H1 (cell line): ENCODE measurements at regions of chr13 and their contacts with region 1.

Region 1: GRCh38 chr13:57582032-57582431 is 49.5 kb upstream of the PCDH17 start:
- DNase-seq: peak; percentile 21 to 51
- H3K4me3 ChIP-seq: no peak overlapping the region
- H3K27ac ChIP-seq: no peak overlapping the region
- H3K4me1 ChIP-seq: peaks cover 0 to 3% (median 0%) of the 10 kb centered on the region in 4 experiments; a peak in 1 of 7 replicates
- H3K27me3 ChIP-seq: no peaks in the 10 kb centered on the region
- CTCF ChIP-seq: peak in 2 of 3 experiments; percentile 50 to 61; a peak in 3 of 4 replicates
- EP300 ChIP-seq: no peak
- POLR2A ChIP-seq: no peak
- RAD21 ChIP-seq: peak; percentile 49 to 65

Region 2: DNA sequence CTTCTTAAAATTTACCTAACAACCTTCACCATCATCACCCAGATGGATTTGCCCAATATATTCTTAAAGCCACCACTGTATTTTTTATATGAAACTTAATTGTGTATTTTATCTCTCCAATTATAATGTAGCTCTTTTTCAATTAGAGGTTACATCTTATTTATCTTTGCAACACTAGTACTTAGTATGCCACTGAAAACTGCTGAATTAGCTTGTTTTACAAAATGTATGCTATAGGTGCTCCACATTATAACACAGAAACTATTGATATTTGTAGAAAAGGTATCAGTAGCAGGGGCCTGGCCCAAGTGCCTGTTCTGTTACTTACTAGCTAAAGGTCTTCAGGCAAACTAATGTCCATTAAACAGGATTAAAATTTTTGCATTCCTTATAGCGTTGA is 13.7 kb after region 1 on chr13:
- CTCF ChIA-PET with region 1: interaction called, 16 read pairs
- POLR2A ChIA-PET with region 1: no interaction called
- DNase-seq: no peak
- H3K4me3 ChIP-seq: no peak overlapping the region
- H3K27ac ChIP-seq: no peak overlapping the region
- H3K4me1 ChIP-seq: no peaks in the 10 kb centered on the region
- H3K27me3 ChIP-seq: no peaks in the 10 kb centered on the region
- CTCF ChIP-seq: no peak
- EP300 ChIP-seq: no peak
- POLR2A ChIP-seq: no peak
- RAD21 ChIP-seq: no peak

Region 3: DNA sequence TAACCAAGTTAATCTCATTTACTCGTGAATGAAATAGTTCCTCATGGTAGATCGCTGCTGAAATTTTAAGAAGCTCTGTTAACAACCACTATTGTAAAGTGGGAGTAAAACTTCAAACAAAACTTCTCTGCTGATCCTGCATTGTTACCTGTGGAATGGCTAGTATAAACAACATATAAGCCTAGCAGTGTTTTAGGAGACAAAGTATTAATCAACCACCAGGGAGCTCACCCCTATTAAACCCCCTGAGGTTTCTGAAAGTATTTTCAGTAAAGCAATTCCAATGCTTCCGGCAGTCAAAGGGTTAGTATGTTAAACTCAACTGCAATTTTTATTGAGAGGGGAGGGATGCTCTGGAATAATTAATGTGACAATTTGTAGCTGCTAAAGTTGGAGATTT is 19.5 kb after region 1 on chr13:
- CTCF ChIA-PET with region 1: interaction called, 16 read pairs
- POLR2A ChIA-PET with region 1: no interaction called
- DNase-seq: no peak
- H3K4me3 ChIP-seq: no peak overlapping the region
- H3K27ac ChIP-seq: no peak overlapping the region
- H3K4me1 ChIP-seq: peaks cover 0 to 6% (median 2%) of the 10 kb centered on the region in 4 experiments; a peak in 2 of 7 replicates
- H3K27me3 ChIP-seq: no peaks in the 10 kb centered on the region
- CTCF ChIP-seq: no peak
- EP300 ChIP-seq: no peak
- POLR2A ChIP-seq: no peak
- RAD21 ChIP-seq: no peak

Region 4: DNA sequence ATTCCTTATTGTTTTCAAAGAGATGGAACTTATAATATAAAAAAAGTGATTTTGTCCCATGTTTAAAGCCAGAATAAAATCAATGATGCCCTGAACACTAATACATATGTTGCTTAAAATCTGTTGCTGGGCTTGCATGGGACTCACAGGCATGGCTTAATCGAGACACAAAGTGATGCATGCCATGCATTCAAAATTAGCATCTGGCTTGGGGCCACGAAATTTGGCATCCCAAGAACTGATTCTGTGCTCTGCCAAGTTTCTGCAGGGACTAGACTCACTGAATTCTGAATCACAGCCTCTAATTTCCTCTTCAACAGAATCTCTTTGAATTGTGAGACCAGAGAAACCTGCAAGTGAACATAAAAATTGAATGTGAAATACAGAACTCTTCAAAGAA is 158.7 kb after region 1 on chr13:
- CTCF ChIA-PET with region 1: no interaction called
- POLR2A ChIA-PET with region 1: no interaction called
- DNase-seq: no peak
- H3K4me3 ChIP-seq: no peak overlapping the region
- H3K27ac ChIP-seq: no peak overlapping the region
- H3K4me1 ChIP-seq: peaks cover 0 to 12% (median 4%) of the 10 kb centered on the region in 4 experiments; a peak in 3 of 7 replicates
- H3K27me3 ChIP-seq: no peaks in the 10 kb centered on the region
- CTCF ChIP-seq: no peak
- EP300 ChIP-seq: no peak
- POLR2A ChIP-seq: no peak
- RAD21 ChIP-seq: no peak